WTC11 (cell line): ENCODE measurements at regions of chr16 and their contacts with region 1.

Region 1: GRCh38 chr16:30615358-30616091 is 5.3 kb upstream of the ZNF689 start:
- DNase-seq: peak; percentile 98
- ATAC-seq: peak; percentile 90
- H3K4me3 Mint-ChIP-seq: no peak overlapping the region
- H3K27ac Mint-ChIP-seq: no peak overlapping the region
- H3K4me1 Mint-ChIP-seq: peaks cover 1% of the 10 kb centered on the region; the same call in 1 of the 2 replicates
- H3K27me3 Mint-ChIP-seq: peaks cover 17% of the 10 kb centered on the region
- CTCF ChIP-seq: peak; percentile 99

Region 2: DNA sequence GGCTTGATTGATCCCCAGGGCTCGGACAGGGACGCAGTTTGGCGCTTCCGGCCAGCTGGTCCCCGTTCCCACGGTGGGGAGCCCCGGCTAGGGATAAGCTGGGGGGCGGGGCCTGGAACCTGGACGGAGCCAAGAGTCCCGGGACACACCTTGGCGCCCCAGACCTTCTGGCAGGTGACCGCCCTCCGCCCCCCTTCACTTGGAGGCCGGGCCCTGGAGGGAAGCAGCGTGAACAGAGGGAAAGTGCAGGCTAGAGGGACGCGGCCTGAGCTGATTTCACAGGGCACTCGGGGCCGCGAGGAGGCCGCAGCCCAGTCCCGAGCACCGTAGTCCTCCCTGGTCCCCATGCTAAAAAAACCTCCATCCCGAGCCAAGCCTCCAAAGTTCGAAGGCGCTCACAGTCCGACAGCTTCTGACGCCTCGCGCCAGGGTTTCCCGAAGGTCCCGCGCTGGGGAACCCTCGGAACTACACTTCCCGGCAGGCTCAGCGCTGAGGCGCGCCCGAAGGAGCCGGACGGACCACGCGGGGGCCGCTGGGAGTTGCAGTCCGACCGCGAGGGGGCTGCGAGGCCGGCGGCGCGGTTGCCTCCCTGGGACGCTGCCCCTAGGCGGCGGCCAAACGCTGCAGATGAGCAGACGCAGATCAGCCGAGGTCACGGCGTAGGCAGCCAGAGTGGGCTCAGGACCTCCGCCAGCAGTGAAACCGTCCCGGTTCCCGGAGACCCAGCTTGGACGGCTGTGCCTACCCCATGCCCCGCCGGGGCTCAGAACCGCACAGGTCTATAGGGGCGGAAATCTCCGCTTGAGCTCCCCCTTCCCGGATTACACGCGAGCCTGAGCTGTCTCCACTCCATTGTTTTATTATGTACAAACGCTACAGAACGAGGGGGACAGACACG is 523.8 kb before region 1 on chr16 and contains the start of gene TBX6:
- CTCF ChIA-PET with region 1: interaction called, 12 read pairs
- POLR2A ChIA-PET with region 1: interaction called, 4 read pairs
- DNase-seq: peak; percentile 97
- ATAC-seq: peak; percentile 69
- H3K4me3 Mint-ChIP-seq: peak within 1 kb of the TSS; percentile 87
- H3K27ac Mint-ChIP-seq: peak within 1 kb of the TSS; percentile 98
- H3K4me1 Mint-ChIP-seq: peaks cover 27% of the 10 kb centered on the region
- H3K27me3 Mint-ChIP-seq: peaks cover 3% of the 10 kb centered on the region
- CTCF ChIP-seq: no peak
- total RNA-seq, gene TBX6: 5.1 to 7.6 TPM (median 6.6 TPM) in 3 replicates

Region 3: GRCh38 chr16:30370444-30371247 is 244.9 kb before region 1 on chr16 and contains the start of gene TBC1D10B:
- CTCF ChIA-PET with region 1: interaction called, 11 read pairs
- POLR2A ChIA-PET with region 1: interaction called, 3 read pairs
- DNase-seq: peak; percentile 99
- ATAC-seq: peak; percentile 91
- H3K4me3 Mint-ChIP-seq: peak within 1 kb of the TSS; percentile 80
- H3K27ac Mint-ChIP-seq: peak within 1 kb of the TSS; percentile 57
- H3K4me1 Mint-ChIP-seq: peaks cover 37% of the 10 kb centered on the region
- H3K27me3 Mint-ChIP-seq: no peaks in the 10 kb centered on the region; the same call in 1 of the 2 replicates
- CTCF ChIP-seq: no peak
- total RNA-seq, gene TBC1D10B: 33.4 to 40.5 TPM (median 34.6 TPM) in 3 replicates

Region 4: DNA sequence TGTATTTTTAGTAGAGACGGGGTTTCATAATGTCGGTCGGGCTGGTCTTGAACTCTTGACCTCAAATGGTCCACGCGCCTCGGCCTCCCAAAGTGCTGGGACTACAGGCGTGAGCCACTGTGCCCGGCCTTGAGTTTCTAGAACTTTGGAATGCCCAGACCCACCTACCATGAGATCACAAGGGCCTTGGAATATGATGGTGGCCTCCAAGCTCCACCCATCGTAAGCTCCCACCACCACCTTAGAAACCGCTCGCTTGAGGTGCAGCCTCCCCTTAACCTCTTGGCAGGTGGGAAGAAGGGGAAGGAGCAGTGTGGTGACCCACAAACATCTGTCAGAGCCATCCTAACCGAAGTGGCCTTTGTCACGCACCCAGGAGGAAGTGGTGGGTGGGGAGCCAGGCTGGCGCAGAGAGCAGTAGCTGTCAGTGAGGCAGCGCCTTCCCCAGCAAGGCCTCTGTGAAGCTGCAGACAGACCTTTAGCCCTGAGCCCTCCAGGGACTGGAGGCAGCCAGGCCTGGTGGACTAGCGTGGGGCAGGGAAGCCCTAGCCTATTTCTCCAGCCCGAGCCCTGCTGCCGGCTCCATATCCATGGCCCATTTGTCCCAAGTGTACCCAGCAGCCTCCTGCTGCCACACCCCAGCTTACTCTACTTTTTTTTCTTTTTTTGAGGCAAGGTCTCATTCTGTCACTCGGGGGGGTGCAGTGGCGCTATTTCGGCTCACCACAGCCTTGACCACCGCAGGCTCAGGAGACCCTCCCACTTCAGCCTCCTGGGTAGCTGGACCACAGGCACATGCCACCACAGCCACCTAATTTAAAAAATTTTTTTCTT is 156.7 kb before region 1 on chr16:
- CTCF ChIA-PET with region 1: interaction called, 25 read pairs
- POLR2A ChIA-PET with region 1: no interaction called
- DNase-seq: no peak
- ATAC-seq: no peak; the same call in 1 of the 2 replicates
- H3K4me3 Mint-ChIP-seq: no peak overlapping the region
- H3K27ac Mint-ChIP-seq: no peak overlapping the region
- H3K4me1 Mint-ChIP-seq: no peaks in the 10 kb centered on the region; the same call in 1 of the 2 replicates
- H3K27me3 Mint-ChIP-seq: peaks cover 3% of the 10 kb centered on the region; the same call in 1 of the 2 replicates
- CTCF ChIP-seq: no peak

Region 5: GRCh38 chr16:30541502-30542329 is 73.8 kb before region 1 on chr16:
- CTCF ChIA-PET with region 1: interaction called, 12 read pairs
- POLR2A ChIA-PET with region 1: no interaction called
- DNase-seq: no peak
- ATAC-seq: peak; percentile 52
- H3K4me3 Mint-ChIP-seq: no peak overlapping the region
- H3K27ac Mint-ChIP-seq: no peak overlapping the region
- H3K4me1 Mint-ChIP-seq: peaks cover 10% of the 10 kb centered on the region
- H3K27me3 Mint-ChIP-seq: no peaks in the 10 kb centered on the region
- CTCF ChIP-seq: no peak

Region 6: GRCh38 chr16:30602616-30603277 is 12.8 kb before region 1 on chr16:
- CTCF ChIA-PET with region 1: interaction called, 41 read pairs
- POLR2A ChIA-PET with region 1: interaction called, 4 read pairs
- DNase-seq: no peak
- ATAC-seq: no peak
- H3K4me3 Mint-ChIP-seq: no peak overlapping the region
- H3K27ac Mint-ChIP-seq: peak overlapping the region; percentile 57; the same call in 1 of the 2 replicates
- H3K4me1 Mint-ChIP-seq: no peaks in the 10 kb centered on the region
- H3K27me3 Mint-ChIP-seq: no peaks in the 10 kb centered on the region
- CTCF ChIP-seq: no peak